ENCODE measurements at regions of chr2 and their contacts with region 1.

Region 1: GRCh38 chr2:120174963-120175581 is 48.1 kb downstream of the TMEM185B start:
- DNase-seq: peak; percentile 46
- ATAC-seq: no peak
- H3K4me3 Mint-ChIP-seq: no peak overlapping the region
- H3K27ac Mint-ChIP-seq: peak overlapping the region; percentile 64
- H3K4me1 Mint-ChIP-seq: peaks cover 51% of the 10 kb centered on the region
- H3K27me3 Mint-ChIP-seq: no peaks in the 10 kb centered on the region

Region 2: DNA sequence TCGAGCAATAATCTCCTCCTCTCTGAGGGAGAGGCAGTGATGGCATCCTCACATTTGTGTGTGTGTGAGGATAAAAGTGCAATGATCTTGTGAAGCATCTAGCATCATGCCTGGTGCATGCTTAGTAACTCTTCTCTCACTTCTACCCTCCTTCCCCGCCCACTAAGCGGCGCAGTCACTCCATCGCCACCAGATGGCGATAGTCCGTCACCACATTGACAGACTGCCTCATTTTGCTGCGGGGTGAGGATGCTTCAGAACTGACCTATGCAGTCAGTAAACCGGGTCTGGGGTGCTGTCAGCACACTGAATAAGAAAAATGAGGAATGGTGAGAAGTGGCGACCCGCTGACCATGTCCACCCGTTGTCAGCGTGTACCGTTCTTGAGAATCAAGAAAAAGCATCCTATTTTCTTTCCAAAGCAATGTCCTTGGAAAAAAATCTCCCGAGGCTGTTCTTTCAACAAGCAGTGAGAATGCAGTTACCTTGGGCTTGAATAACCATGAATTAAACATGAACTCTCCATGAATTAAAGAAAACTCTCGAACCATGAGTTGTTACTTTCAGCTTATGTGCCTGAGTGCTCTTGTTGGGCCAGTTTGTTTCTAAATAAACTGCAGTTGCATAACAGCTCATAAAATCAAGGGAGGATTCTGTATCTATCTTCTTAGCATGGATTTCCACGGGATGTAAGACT is 533.4 kb before region 1 on chr2:
- CTCF ChIA-PET with region 1: interaction called, 44 read pairs
- POLR2A ChIA-PET with region 1: interaction called, 7 read pairs
- DNase-seq: peak; percentile 79
- ATAC-seq: peak; percentile 97
- H3K4me3 Mint-ChIP-seq: no peak overlapping the region
- H3K27ac Mint-ChIP-seq: no peak overlapping the region
- H3K4me1 Mint-ChIP-seq: peaks cover 2% of the 10 kb centered on the region
- H3K27me3 Mint-ChIP-seq: peaks cover 3% of the 10 kb centered on the region

Region 3: GRCh38 chr2:119759451-119760236 is 415.4 kb before region 1 on chr2 and contains the start of gene PTPN4:
- CTCF ChIA-PET with region 1: interaction called, 115 read pairs
- POLR2A ChIA-PET with region 1: interaction called, 7 read pairs
- DNase-seq: peak; percentile 99
- ATAC-seq: peak; percentile 96
- H3K4me3 Mint-ChIP-seq: peak within 1 kb of the TSS; percentile 91
- H3K27ac Mint-ChIP-seq: peak within 1 kb of the TSS; percentile 82
- H3K4me1 Mint-ChIP-seq: peaks cover 44% of the 10 kb centered on the region
- H3K27me3 Mint-ChIP-seq: peaks cover under 1% of the 10 kb centered on the region
- total RNA-seq, gene PTPN4: 89.1 to 91.3 TPM

Region 4: GRCh38 chr2:119929537-119929936 is 245.5 kb before region 1 on chr2:
- CTCF ChIA-PET with region 1: interaction called, 11 read pairs
- POLR2A ChIA-PET with region 1: no interaction called
- DNase-seq: peak; percentile 67
- ATAC-seq: peak; percentile 88
- H3K4me3 Mint-ChIP-seq: peak overlapping the region; percentile 75
- H3K27ac Mint-ChIP-seq: peak overlapping the region; percentile 93
- H3K4me1 Mint-ChIP-seq: peaks cover 55% of the 10 kb centered on the region
- H3K27me3 Mint-ChIP-seq: no peaks in the 10 kb centered on the region

Region 5: GRCh38 chr2:120155308-120155707 is 19.8 kb before region 1 on chr2:
- CTCF ChIA-PET with region 1: interaction called, 12 read pairs
- POLR2A ChIA-PET with region 1: no interaction called
- DNase-seq: no peak
- ATAC-seq: no peak
- H3K4me3 Mint-ChIP-seq: no peak overlapping the region
- H3K27ac Mint-ChIP-seq: no peak overlapping the region
- H3K4me1 Mint-ChIP-seq: no peaks in the 10 kb centered on the region
- H3K27me3 Mint-ChIP-seq: no peaks in the 10 kb centered on the region

Region 6: DNA sequence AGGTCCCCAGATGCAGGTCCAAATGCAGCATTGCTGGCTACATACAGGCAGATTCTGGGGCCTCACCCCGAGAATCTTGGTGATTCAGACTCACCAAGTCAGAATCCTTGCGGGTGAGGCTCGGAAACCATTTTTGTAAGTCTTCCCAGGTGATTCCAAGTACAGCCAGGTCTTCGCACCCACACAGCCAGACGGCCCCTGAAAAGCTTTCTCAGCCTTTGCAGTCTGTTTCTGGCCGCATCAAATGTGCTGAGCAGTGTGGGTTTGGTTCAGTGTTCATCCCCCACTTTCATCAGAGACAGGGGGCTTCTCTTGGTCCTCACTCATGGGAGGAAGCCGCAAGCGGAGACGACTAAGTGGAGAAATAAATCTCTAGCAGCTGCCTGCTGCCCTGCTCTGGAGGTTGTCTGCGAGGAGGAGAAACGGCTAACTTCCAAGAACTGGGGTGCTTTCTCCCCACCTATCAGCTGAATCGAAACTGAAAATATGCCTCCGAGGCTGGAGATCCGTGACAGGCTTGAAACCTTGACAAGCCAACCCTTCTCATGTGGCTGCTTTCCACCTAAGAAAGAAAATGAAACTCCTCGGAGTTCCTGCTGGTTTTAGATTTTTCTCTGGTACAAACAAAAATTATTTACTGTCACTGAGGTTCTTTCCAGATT is 57.0 kb after region 1 on chr2:
- CTCF ChIA-PET with region 1: interaction called, 37 read pairs
- POLR2A ChIA-PET with region 1: interaction called, 11 read pairs
- DNase-seq: peak; percentile 91
- ATAC-seq: peak; percentile 91
- H3K4me3 Mint-ChIP-seq: peak overlapping the region; percentile 99
- H3K27ac Mint-ChIP-seq: peak overlapping the region; percentile 99
- H3K4me1 Mint-ChIP-seq: peaks cover 55% of the 10 kb centered on the region
- H3K27me3 Mint-ChIP-seq: no peaks in the 10 kb centered on the region

Region 7: DNA sequence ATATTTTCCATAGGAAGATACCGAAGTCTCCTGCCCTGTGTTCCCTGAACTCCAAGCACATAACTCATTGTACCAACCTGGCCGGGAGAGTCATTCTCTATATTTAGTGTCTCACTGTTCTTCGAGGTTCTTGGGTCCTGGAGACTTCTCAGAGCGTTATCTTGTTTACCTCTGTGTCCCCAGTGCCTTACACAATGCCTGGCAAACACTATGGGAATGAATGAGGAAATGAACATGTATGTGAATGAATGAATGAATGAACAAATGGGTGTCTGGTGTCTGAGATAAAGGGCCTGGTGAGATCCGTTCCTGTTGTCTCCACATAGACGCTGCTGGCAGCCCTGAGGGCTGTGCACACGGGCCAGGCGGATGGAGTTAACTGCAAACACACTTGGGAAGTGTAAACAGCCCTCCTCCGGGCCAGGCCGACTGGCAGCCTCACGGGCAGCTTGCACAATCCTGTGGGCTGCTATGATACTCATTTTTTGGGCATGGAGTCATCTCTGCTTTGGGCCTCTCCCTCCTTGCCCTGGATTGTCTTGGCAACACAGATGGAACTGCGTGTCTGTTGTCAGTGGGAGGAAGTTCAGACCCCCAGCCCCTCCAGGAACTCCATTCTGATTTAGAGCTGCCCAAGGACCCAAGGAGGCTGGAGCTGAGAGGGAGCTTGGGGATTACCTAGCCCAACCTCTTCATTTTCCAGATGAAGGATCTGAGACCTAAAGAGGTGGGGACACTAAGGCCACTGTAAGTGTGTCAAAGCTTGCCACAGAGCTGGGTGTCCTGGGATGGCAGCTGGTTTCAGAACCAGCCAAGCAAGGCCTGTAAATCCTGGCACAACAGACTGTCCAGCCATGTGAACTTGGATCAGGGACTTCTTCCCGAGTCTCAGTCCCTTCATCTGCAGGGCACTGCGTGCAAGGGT is 295.2 kb after region 1 on chr2:
- CTCF ChIA-PET with region 1: no interaction called
- POLR2A ChIA-PET with region 1: no interaction called
- DNase-seq: no peak
- ATAC-seq: no peak
- H3K4me3 Mint-ChIP-seq: no peak overlapping the region
- H3K27ac Mint-ChIP-seq: no peak overlapping the region
- H3K4me1 Mint-ChIP-seq: no peaks in the 10 kb centered on the region
- H3K27me3 Mint-ChIP-seq: no peaks in the 10 kb centered on the region